K562 (cell line): ENCODE measurements at regions of chr5 and their contacts with region 1.

Region 1: GRCh38 chr5:180950291-180950949 is 38.2 kb upstream of the BTNL3 start:
- DNase-seq: no peak
- ATAC-seq: no peak
- H3K4me3 ChIP-seq: no peak overlapping the region
- H3K27ac ChIP-seq: no peak overlapping the region
- H3K4me1 ChIP-seq: no peaks in the 10 kb centered on the region; a peak in 1 of 5 replicates
- H3K27me3 ChIP-seq: no peaks in the 10 kb centered on the region
- CTCF ChIP-seq: no peak
- EP300 ChIP-seq: no peak
- POLR2A ChIP-seq: no peak
- RAD21 ChIP-seq: no peak

Region 2: GRCh38 chr5:180769821-180770220 is 180.6 kb before region 1 on chr5:
- CTCF ChIA-PET with region 1: no interaction called
- POLR2A ChIA-PET with region 1: no interaction called
- in situ Hi-C with region 1: no loop called
- intact Hi-C with region 1: no loop called
- DNase-seq: no peak
- ATAC-seq: no peak
- H3K4me3 ChIP-seq: no peak overlapping the region
- H3K27ac ChIP-seq: no peak overlapping the region
- H3K4me1 ChIP-seq: no peaks in the 10 kb centered on the region
- H3K27me3 ChIP-seq: no peaks in the 10 kb centered on the region
- CTCF ChIP-seq: no peak
- EP300 ChIP-seq: no peak
- POLR2A ChIP-seq: no peak
- RAD21 ChIP-seq: no peak

Region 3: GRCh38 chr5:180825768-180826525 is 124.5 kb before region 1 on chr5:
- CTCF ChIA-PET with region 1: no interaction called
- POLR2A ChIA-PET with region 1: no interaction called
- in situ Hi-C with region 1: no loop called
- intact Hi-C with region 1: no loop called
- DNase-seq: no peak
- ATAC-seq: 0 out of 3 replicates have a peak, but pooled peaks have one; percentile 13
- H3K4me3 ChIP-seq: no peak overlapping the region
- H3K27ac ChIP-seq: no peak overlapping the region
- H3K4me1 ChIP-seq: peaks cover 7 to 11% of the 10 kb centered on the region in 2 experiments; a peak in 4 of 5 replicates
- H3K27me3 ChIP-seq: no peaks in the 10 kb centered on the region
- CTCF ChIP-seq: no peak
- EP300 ChIP-seq: no peak
- POLR2A ChIP-seq: no peak
- RAD21 ChIP-seq: no peak

Region 4: DNA sequence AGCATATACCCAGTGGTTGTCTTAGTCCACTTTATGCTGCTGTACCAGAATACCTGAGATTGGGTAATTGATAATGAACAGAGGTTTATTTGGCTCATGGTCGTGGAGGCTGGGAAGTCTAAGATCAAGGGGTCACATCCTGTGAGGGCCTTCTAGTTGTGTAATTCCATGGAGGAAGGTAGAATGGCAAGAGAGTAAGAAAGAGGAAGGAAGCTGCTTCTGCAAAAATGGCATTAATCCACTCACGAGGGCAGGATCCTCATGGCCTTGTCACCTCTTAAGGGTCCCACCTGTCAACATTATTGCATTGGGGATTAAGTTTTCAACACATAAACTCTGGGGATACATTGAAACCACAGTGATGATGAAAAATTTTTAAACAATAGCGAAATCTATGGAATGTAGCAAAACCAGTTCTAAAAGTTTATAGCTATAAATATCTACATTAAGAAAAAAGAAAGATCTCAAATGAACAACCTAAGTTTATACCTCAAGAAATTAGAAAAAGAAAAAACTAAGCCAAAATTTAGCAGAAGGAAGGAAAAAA is 34.4 kb before region 1 on chr5:
- CTCF ChIA-PET with region 1: no interaction called
- POLR2A ChIA-PET with region 1: no interaction called
- in situ Hi-C with region 1: no loop called
- intact Hi-C with region 1: no loop called
- DNase-seq: no peak
- ATAC-seq: no peak
- H3K4me3 ChIP-seq: no peak overlapping the region
- H3K27ac ChIP-seq: no peak overlapping the region
- H3K4me1 ChIP-seq: peaks cover 0 to 3% of the 10 kb centered on the region in 2 experiments; a peak in 1 of 5 replicates
- H3K27me3 ChIP-seq: no peaks in the 10 kb centered on the region
- CTCF ChIP-seq: no peak
- EP300 ChIP-seq: no peak
- POLR2A ChIP-seq: no peak
- RAD21 ChIP-seq: no peak

Region 5: DNA sequence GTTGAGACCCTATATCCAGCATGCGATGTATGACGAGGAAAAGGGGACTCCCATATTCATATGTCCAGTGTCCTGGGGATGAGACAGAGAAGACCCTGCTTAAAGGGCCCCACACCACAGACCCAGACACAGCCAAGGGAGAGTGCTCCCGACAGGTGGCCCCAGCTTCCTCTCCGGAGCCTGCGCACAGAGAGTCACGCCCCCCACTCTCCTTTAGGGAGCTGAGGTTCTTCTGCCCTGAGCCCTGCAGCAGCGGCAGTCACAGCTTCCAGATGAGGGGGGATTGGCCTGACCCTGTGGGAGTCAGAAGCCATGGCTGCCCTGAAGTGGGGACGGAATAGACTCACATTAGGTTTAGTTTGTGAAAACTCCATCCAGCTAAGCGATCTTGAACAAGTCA is 55.4 kb after region 1 on chr5:
- CTCF ChIA-PET with region 1: no interaction called
- POLR2A ChIA-PET with region 1: interaction called, 3 read pairs
- in situ Hi-C with region 1: no loop called
- intact Hi-C with region 1: loop called (anchors 10 kb)
- DNase-seq: peak in 3 of 4 experiments; percentile 1 to 3 (median 2)
- ATAC-seq: no peak
- H3K4me3 ChIP-seq: no peak overlapping the region
- H3K27ac ChIP-seq: no peak overlapping the region
- H3K4me1 ChIP-seq: peaks cover 5 to 6% of the 10 kb centered on the region in 2 experiments; a peak in 2 of 5 replicates
- H3K27me3 ChIP-seq: no peaks in the 10 kb centered on the region
- CTCF ChIP-seq: no peak
- EP300 ChIP-seq: no peak
- POLR2A ChIP-seq: no peak
- RAD21 ChIP-seq: no peak

Region 6: DNA sequence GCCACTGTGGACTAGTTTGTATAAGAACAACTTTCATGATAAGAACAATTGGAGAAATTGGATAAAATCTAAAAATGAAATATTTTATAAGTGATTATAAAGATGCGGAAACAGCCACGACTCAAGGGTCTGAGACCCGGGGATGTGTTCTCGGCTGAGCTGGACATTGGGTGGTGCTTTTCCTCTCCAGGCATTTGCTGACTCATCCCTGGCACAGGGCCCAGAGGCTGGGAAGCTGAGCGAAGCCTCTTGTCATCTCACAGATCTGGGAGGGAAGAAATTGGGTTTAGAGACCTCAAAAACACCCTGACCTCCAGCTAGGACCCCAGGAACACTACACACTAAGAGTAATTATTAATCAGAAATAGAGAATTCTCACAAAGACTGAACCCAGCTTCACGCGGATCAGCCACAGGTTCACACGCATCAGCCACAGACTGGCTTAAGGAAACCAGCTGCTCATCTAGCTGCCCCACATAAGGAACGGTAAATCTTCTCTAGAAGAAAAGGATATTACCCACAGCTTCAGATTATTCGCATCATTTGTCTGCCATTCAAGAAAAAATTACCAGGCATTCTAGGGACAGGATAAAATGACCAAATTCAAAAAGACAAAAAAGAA is 183.3 kb after region 1 on chr5:
- CTCF ChIA-PET with region 1: no interaction called
- POLR2A ChIA-PET with region 1: no interaction called
- in situ Hi-C with region 1: loop called (anchors 10 kb)
- intact Hi-C with region 1: no loop called
- DNase-seq: peak; percentile 85 to 95 (median 88)
- ATAC-seq: peak; percentile 84
- H3K4me3 ChIP-seq: no peak overlapping the region
- H3K27ac ChIP-seq: peak overlapping the region; percentile 64
- H3K4me1 ChIP-seq: peaks cover 21 to 35% of the 10 kb centered on the region in 2 experiments
- H3K27me3 ChIP-seq: no peaks in the 10 kb centered on the region
- CTCF ChIP-seq: no peak
- EP300 ChIP-seq: peak; percentile 60; the same call in 1 of the 2 replicates
- POLR2A ChIP-seq: no peak
- RAD21 ChIP-seq: no peak